Left lung (tissue), 14 donors: ENCODE measurements at regions of chr9 and their contacts with region 1.

Region 1: DNA sequence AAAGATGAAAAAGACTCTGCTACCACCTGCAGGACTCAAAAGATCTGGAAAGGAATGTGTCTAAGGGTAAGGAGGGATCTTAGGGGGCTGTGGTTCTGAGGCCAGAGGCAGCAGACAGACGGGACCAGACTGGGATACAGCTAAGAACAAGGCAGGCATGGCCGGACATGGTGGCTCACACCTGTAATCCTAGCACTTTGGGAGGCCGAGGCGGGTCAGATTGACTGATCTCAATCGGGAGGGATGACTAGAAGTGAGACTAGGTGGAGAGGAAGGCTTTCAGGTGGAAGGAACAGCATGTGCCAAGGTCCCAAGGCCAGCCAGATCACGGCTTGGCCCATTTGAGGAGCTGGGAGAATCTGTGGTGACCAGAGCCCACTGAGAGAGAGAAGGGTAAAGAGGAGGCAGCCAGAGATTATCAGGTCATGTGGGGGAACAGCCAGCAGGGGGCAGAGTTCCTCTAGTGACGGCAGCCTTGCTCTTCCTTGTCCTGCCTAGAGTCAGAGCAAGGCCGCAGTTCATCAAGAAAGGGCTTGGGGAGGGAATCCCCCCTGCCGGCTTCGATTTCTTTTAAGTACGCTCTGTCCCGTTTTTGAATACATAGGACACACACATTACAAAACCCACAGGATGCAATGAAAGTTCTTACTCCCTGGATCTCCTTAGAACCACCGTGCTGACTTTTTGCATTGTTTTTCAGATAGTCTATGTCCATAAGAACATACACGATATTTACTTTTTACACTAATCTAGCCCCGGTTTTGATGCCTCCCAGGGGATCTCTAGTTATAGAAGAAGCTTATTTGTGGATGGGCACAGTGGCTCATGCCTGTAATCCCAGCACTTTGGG is 2.6 kb upstream of the OLFML2A start:
- DNase-seq: peak; percentile 77 to 89 (median 84)
- ATAC-seq: peak; percentile 43
- H3K4me3 ChIP-seq: no peak overlapping the region
- H3K27ac ChIP-seq: no peak overlapping the region
- H3K4me1 ChIP-seq: peaks cover 4 to 60% of the 10 kb centered on the region in 2 donors
- H3K27me3 ChIP-seq: peaks cover 13 to 38% of the 10 kb centered on the region in 2 donors
- CTCF ChIP-seq: peak; percentile 87 to 89

Region 2: DNA sequence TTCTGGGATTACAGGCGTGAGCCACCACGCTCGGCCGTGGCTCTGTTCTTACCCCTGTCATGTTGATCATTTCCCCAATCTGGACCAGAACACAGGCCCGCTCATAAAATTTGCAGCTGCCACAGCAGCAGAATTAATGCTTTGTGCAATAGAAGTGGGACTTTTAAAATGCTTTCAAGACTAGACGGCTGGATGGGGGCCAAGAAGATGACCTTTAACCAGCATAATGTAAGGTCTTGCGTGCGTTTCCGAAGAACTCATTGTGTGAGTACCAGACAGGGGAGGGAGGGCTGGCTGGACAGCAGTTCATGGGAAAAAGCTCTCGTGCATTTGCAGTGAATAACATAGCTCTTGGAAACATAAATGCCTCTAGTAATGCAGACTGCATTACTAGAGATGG is 75.4 kb after region 1 on chr9:
- intact Hi-C with region 1: loop called (anchors 2 to 5 kb)
- DNase-seq: peak in 1 of 4 donors; percentile 37
- ATAC-seq: no peak
- H3K4me3 ChIP-seq: no peak overlapping the region
- H3K27ac ChIP-seq: no peak overlapping the region
- H3K4me1 ChIP-seq: peaks cover 8 to 17% of the 10 kb centered on the region in 2 donors
- H3K27me3 ChIP-seq: no peaks in the 10 kb centered on the region
- CTCF ChIP-seq: no peak

Region 3: DNA sequence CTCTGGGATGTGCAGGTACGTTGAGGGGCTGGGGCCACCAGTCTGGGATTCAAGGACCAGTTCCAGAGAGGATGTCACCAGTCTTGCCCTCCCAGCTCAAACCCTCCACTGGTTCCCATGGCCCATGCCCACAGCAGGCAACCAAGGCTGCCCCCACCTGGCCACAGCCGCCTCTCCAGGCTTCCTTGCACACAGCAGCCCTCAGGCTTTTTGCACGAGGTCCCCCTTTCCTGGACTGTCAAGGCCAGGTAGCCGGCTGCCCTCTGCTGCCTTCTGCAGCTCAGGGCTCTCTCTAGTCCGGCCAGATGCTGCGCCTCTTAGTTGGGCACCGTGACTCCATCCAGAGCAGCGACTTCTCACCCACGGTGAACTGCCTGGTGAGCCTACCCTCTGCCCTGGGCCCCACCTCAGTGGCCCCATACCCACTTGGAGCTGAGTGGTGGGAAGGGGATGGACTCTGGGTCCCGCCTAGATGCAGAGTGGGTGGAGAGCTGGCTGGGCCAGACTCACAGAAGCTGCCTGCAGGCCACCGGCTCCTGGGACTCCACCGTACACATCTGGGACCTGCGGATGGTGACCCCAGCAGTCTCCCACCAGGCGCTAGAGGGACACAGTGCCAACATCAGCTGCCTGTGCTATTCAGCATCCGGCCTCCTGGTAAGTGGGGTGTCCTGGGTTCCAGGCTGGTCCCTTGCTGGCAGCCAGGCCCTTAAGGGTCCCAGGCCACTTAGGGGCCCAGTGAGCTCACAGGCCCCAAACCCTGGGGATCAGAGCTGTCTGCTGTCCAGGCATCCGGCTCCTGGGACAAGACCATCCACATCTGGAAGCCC is 81.8 kb after region 1 on chr9:
- intact Hi-C with region 1: loop called in 1 of 2 experiments (anchors 2 kb)
- DNase-seq: no peak
- ATAC-seq: no peak
- H3K4me3 ChIP-seq: no peak overlapping the region
- H3K27ac ChIP-seq: no peak overlapping the region
- H3K4me1 ChIP-seq: peaks cover 25 to 47% of the 10 kb centered on the region in 2 donors
- H3K27me3 ChIP-seq: no peaks in the 10 kb centered on the region
- CTCF ChIP-seq: no peak